ENCODE measurements at regions of chr12 and their contacts with region 1.

Region 1: DNA sequence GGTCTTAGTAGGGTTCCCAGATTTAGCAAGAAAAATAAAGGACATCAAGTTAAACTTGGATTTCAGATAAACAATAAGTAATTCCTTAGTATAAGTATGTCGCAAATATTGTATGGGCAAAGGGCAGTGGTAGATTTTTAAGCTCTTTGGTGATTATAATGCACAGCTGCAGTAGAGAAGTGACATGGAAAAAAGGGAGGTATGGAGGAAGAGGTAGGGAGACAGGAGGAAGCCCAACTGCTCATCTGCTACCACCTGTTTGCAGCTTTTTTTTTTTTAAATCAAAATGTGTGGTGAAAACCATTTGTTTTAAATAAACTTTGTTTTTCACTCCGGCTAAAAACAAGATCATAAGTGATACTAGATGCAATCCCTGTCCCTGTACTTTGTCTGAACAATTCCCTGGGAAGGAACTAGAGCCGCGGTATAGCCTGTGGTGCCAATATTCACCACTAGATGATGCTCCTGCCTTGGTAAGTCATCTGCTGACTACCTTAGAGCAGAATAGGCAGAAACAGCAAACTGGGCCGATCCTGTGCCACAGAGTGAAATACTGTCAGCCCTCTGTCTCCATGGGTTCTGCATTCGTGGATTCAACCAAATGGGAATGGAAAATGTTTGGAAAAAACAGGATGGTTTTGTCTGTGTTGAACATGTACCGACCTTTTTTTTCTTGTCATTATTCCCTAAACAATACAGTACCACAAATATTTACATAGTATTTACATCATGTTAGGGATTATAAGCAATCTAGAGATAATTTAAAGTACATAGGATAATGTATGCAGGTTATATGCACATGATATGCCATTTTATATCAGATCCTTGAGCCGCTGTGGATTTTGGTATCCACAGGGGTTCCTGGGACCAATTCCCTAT is 62.4 kb upstream of the PLBD1 start:
- DNase-seq: peak; percentile 63 to 79
- ATAC-seq: peak; percentile 100
- H3K4me3 ChIP-seq: no peak overlapping the region
- H3K27ac ChIP-seq: no peak overlapping the region
- H3K4me1 ChIP-seq: no peaks in the 10 kb centered on the region
- CTCF ChIP-seq: peak; percentile 89
- EP300 ChIP-seq: no peak
- POLR2A ChIP-seq: no peak
- RAD21 ChIP-seq: peak; percentile 88 to 97

Region 2: DNA sequence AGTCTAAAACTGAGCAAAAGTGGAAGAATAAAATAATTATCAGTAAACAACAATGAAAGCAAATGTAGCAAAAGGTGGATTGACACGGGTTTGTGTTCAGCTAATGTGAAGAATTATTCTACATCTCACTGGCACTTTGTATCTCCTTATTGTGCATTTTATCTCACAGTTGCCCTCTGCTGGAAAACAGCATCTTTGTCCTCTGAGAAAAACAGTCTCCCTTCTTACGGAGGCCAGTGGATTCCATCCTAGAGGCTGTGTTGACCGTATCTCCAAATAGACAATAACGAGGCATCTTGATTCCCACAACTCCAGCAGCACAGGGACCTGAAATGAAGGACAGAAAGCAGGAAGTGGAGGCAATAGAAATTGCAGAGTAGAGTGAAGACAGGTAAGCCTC is 11.1 kb before region 1 on chr12:
- CTCF ChIA-PET with region 1: interaction called, 11 read pairs
- POLR2A ChIA-PET with region 1: no interaction called
- DNase-seq: peak; percentile 10 to 37
- ATAC-seq: peak in 1 of 2 experiments; percentile 67; a peak in 3 of 6 replicates
- H3K4me3 ChIP-seq: no peak overlapping the region
- H3K27ac ChIP-seq: no peak overlapping the region
- H3K4me1 ChIP-seq: no peaks in the 10 kb centered on the region
- CTCF ChIP-seq: peak; percentile 28; the same call in 1 of the 3 replicates
- EP300 ChIP-seq: no peak
- POLR2A ChIP-seq: no peak
- RAD21 ChIP-seq: peak in 1 of 2 experiments; percentile 47; a peak in 2 of 5 replicates